K562 (cell line): ENCODE measurements at regions of chr22 and their contacts with region 1.

Region 1: GRCh38 chr22:42697542-42698013 is 23.1 kb downstream of the A4GALT start:
- DNase-seq: no peak
- ATAC-seq: no peak
- H3K4me3 ChIP-seq: no peak overlapping the region
- H3K27ac ChIP-seq: no peak overlapping the region
- H3K4me1 ChIP-seq: peaks cover 0 to 29% of the 10 kb centered on the region in 2 experiments; a peak in 4 of 5 replicates
- H3K27me3 ChIP-seq: peaks cover 0 to 23% of the 10 kb centered on the region in 2 experiments; a peak in 1 of 5 replicates
- CTCF ChIP-seq: no peak
- EP300 ChIP-seq: no peak
- POLR2A ChIP-seq: no peak
- RAD21 ChIP-seq: no peak

Region 2: DNA sequence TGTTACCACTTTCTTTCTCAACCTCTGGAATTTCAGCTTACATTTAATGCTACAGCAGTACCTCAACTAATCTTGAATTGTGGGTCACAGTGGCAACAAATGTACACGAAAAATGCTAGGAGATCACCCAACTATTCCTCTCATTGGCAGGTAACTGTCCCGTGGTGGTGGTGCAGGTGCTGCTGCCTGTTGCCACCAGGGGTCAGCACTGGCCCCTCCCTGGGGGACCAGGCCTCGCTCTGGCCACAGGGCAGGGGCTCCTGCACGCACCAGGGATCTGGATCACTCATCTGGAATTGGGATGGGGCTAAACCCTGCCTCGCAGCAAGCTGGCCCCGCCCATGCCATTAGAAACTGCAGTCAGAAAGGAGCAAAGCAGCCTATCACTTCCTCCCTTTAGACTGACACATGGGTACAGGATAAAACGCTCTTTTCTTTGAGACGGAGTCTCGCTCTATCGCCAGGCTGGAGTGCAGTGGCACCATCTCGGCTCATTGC is 76.0 kb before region 1 on chr22:
- CTCF ChIA-PET with region 1: no interaction called
- POLR2A ChIA-PET with region 1: no interaction called
- in situ Hi-C with region 1: no loop called
- intact Hi-C with region 1: loop called (anchors 10 kb)
- DNase-seq: peak; percentile 71 to 81 (median 80)
- ATAC-seq: peak; percentile 95
- H3K4me3 ChIP-seq: no peak overlapping the region
- H3K27ac ChIP-seq: no peak overlapping the region
- H3K4me1 ChIP-seq: peaks cover 17 to 50% of the 10 kb centered on the region in 2 experiments; a peak in 4 of 5 replicates
- H3K27me3 ChIP-seq: no peaks in the 10 kb centered on the region
- CTCF ChIP-seq: peak; percentile 81 to 92 (median 82)
- EP300 ChIP-seq: no peak
- POLR2A ChIP-seq: no peak
- RAD21 ChIP-seq: peak; percentile 63 to 83